ENCODE measurements at regions of chr2 and their contacts with region 1.

Region 1: GRCh38 chr2:26740890-26741302 is 23.2 kb upstream of the SLC35F6 start:
- DNase-seq: peak; percentile 35
- H3K4me3 ChIP-seq: no peak overlapping the region
- H3K27ac ChIP-seq: no peak overlapping the region
- H3K4me1 ChIP-seq: no peaks in the 10 kb centered on the region
- H3K27me3 ChIP-seq: no peaks in the 10 kb centered on the region

Region 2: GRCh38 chr2:26602575-26602974 is 138.3 kb before region 1 on chr2:
- in situ Hi-C with region 1: loop called (anchors 5 kb)
- DNase-seq: no peak
- H3K4me3 ChIP-seq: no peak overlapping the region
- H3K27ac ChIP-seq: no peak overlapping the region
- H3K4me1 ChIP-seq: no peaks in the 10 kb centered on the region
- H3K27me3 ChIP-seq: peaks cover 41% of the 10 kb centered on the region

Region 3: DNA sequence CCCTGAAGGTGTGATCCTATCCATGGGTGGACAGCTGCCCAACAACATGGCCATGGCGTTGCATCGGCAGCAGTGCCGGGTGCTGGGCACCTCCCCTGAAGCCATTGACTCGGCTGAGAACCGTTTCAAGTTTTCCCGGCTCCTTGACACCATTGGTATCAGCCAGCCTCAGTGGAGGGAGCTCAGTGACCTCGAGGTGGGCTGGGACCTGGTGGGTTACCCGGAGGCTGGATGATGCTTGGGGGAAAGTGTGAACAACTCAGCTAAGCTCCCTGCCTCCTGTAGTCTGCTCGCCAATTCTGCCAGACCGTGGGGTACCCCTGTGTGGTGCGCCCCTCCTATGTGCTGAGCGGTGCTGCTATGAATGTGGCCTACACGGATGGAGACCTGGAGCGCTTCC is 492.4 kb after region 1 on chr2:
- in situ Hi-C with region 1: no loop called
- DNase-seq: no peak
- H3K4me3 ChIP-seq: no peak overlapping the region
- H3K27ac ChIP-seq: no peak overlapping the region
- H3K4me1 ChIP-seq: no peaks in the 10 kb centered on the region
- H3K27me3 ChIP-seq: no peaks in the 10 kb centered on the region

Region 4: GRCh38 chr2:27655155-27655951 is 914.5 kb after region 1 on chr2:
- in situ Hi-C with region 1: no loop called
- DNase-seq: peak; percentile 44
- H3K4me3 ChIP-seq: no peak overlapping the region
- H3K27ac ChIP-seq: no peak overlapping the region
- H3K4me1 ChIP-seq: no peaks in the 10 kb centered on the region
- H3K27me3 ChIP-seq: no peaks in the 10 kb centered on the region